ENCODE measurements at regions of chr5 and their contacts with region 1.

Region 1: DNA sequence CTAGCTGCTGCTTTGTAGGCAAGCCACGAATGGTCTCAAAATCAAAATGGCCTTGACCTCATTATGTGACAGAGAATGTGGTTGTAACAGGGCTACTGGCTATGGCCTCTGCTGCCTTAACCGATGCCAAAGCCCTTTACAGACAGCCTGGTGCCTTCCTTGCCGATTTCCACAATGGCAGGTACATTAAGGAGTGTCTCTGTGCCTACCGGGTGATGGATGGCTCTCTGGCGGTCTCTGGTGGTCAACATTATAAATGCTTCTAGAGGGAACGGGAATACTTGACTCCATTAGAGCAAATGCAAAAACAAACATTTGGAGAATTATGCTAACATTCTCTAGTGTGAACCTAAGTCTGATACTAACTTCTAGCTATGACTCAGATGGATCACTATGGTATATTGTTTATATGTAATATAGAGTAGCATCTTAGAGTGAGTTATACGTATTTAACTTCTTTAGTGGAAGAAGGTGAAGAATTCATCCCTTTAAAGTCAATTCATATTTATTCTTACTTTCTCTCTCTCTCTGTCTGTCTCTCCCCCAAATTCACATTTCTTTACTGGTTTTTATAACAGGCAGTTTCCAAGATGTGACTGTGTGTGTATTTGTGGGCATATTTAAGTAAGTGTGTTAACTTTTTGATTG is 52.5 kb downstream of the RPS23 start:
- DNase-seq: peak; percentile 55
- ATAC-seq: peak; percentile 96
- H3K4me3 ChIP-seq: no peak overlapping the region
- H3K27ac ChIP-seq: no peak overlapping the region
- H3K4me1 ChIP-seq: no peaks in the 10 kb centered on the region
- H3K27me3 ChIP-seq: no peaks in the 10 kb centered on the region
- CTCF ChIP-seq: peak; percentile 86
- EP300 ChIP-seq: no peak
- POLR2A ChIP-seq: no peak
- RAD21 ChIP-seq: peak; percentile 71

Region 2: GRCh38 chr5:81425569-81425968 is 800.1 kb before region 1 on chr5:
- CTCF ChIA-PET with region 1: interaction called, 6 read pairs
- POLR2A ChIA-PET with region 1: no interaction called
- in situ Hi-C with region 1: loop called (anchors 10 kb)
- intact Hi-C with region 1: loop called (anchors 1 kb)
- DNase-seq: peak; percentile 32
- ATAC-seq: peak; percentile 53; the same call in 2 of the 3 replicates
- H3K4me3 ChIP-seq: no peak overlapping the region
- H3K27ac ChIP-seq: no peak overlapping the region
- H3K4me1 ChIP-seq: peaks cover 13% of the 10 kb centered on the region; the same call in 1 of the 2 replicates
- H3K27me3 ChIP-seq: no peaks in the 10 kb centered on the region
- CTCF ChIP-seq: peak; percentile 44
- EP300 ChIP-seq: no peak
- POLR2A ChIP-seq: no peak
- RAD21 ChIP-seq: 0 out of 2 replicates have a peak, but pooled peaks have one; percentile 26

Region 3: GRCh38 chr5:82174128-82174918 is 51.3 kb before region 1 on chr5:
- CTCF ChIA-PET with region 1: interaction called, 19 read pairs
- POLR2A ChIA-PET with region 1: no interaction called
- in situ Hi-C with region 1: loop called (anchors 10 kb)
- intact Hi-C with region 1: loop called (anchors 1 kb)
- DNase-seq: peak; percentile 55
- ATAC-seq: peak; percentile 88
- H3K4me3 ChIP-seq: no peak overlapping the region
- H3K27ac ChIP-seq: no peak overlapping the region
- H3K4me1 ChIP-seq: no peaks in the 10 kb centered on the region
- H3K27me3 ChIP-seq: no peaks in the 10 kb centered on the region
- CTCF ChIP-seq: peak; percentile 62
- EP300 ChIP-seq: no peak
- POLR2A ChIP-seq: no peak
- RAD21 ChIP-seq: peak; percentile 39; the same call in 1 of the 2 replicates

Region 4: DNA sequence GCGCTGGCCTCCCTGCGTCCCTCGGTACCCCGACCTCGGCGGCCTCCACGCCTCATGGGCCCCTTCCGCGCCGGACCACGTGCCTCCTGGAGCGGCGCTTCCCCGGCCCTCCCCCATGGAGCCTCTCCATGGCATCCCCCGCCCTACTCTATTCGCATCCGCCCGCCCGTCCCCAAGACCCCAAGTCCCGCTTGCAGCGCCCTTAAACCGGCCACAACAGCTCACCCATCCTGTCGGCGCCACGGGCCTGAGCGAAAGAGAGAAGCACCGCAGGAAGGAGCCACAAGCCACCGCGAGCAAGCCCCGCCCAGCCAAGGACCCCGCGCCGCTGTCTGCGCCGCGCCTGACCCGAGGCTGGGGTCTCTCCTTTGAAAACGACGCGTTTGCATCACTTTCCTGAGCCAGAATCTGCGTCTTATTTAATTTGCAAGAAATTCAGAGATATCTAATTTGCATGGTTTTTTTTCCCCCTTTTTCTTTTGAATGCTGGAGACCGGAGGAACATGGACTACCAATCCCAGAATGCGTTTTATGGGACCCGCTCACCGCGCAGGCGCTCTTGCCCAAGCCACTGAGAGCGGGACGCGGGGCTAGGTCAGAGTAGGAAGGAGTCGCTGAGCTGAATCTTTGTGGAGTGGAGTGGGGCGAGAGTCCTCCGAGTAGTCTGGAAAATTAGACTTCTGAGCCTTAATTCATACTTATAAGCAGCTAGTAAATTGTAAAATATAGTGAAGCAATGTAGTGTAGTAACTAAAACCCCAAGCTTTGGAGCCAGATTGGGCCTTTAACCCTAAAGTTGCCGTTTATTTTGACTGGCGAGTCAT is 52.7 kb after region 1 on chr5 and contains the start of gene RPS23:
- CTCF ChIA-PET with region 1: no interaction called
- POLR2A ChIA-PET with region 1: no interaction called
- in situ Hi-C with region 1: no loop called
- intact Hi-C with region 1: no loop called
- DNase-seq: peak; percentile 86
- ATAC-seq: peak; percentile 95
- H3K4me3 ChIP-seq: peak within 1 kb of the TSS; percentile 77 to 94 (median 83)
- H3K27ac ChIP-seq: peak within 1 kb of the TSS; percentile 83
- H3K4me1 ChIP-seq: peaks cover 42% of the 10 kb centered on the region
- H3K27me3 ChIP-seq: no peaks in the 10 kb centered on the region; a peak in 1 of 5 replicates
- CTCF ChIP-seq: no peak; the same call in 1 of the 2 replicates
- EP300 ChIP-seq: no peak
- POLR2A ChIP-seq: peak; percentile 89
- RAD21 ChIP-seq: no peak
- total RNA-seq, gene RPS23: 3,088 and 3,780 TPM in 2 replicates

Region 5: GRCh38 chr5:82512025-82512424 is 286.4 kb after region 1 on chr5:
- CTCF ChIA-PET with region 1: no interaction called
- POLR2A ChIA-PET with region 1: no interaction called
- in situ Hi-C with region 1: no loop called
- intact Hi-C with region 1: no loop called
- DNase-seq: no peak
- ATAC-seq: no peak
- H3K4me3 ChIP-seq: no peak overlapping the region
- H3K27ac ChIP-seq: no peak overlapping the region
- H3K4me1 ChIP-seq: no peaks in the 10 kb centered on the region
- H3K27me3 ChIP-seq: no peaks in the 10 kb centered on the region
- CTCF ChIP-seq: no peak
- EP300 ChIP-seq: no peak
- POLR2A ChIP-seq: no peak
- RAD21 ChIP-seq: no peak

Region 6: GRCh38 chr5:82537687-82538306 is 312.1 kb after region 1 on chr5:
- CTCF ChIA-PET with region 1: no interaction called
- POLR2A ChIA-PET with region 1: no interaction called
- in situ Hi-C with region 1: no loop called
- intact Hi-C with region 1: no loop called
- DNase-seq: no peak
- ATAC-seq: no peak
- H3K4me3 ChIP-seq: no peak overlapping the region
- H3K27ac ChIP-seq: no peak overlapping the region
- H3K4me1 ChIP-seq: peaks cover 8% of the 10 kb centered on the region; the same call in 1 of the 2 replicates
- H3K27me3 ChIP-seq: no peaks in the 10 kb centered on the region
- CTCF ChIP-seq: no peak
- EP300 ChIP-seq: no peak
- POLR2A ChIP-seq: no peak
- RAD21 ChIP-seq: no peak

Measured in HepG2 (cell line).